Activated T-helper 2 cell treated with anti-CD3 and anti-CD28 coated beads, Interferon-gamma antibody, Interleukin-2, Interleukin-4, amounts not matched to agents 10 μg/mL and 5 μg/mL and 100 μg/mL, durations not matched to agents 14 hours and 24 hours and 36 hours (primary cell): ENCODE measurements at regions of chr16 and their contacts with region 1.

Region 1: GRCh38 chr16:15650019-15650697 is at the start of gene NDE1:
- DNase-seq: peak; percentile 78
- H3K4me3 Mint-ChIP-seq: peak within 1 kb of the TSS; percentile 98
- H3K27ac Mint-ChIP-seq: peak within 1 kb of the TSS; percentile 99
- H3K4me1 Mint-ChIP-seq: peaks cover 16% of the 10 kb centered on the region
- H3K27me3 Mint-ChIP-seq: no peaks in the 10 kb centered on the region
- total RNA-seq, gene NDE1: 88.8 and 97.7 TPM in 2 replicates

Region 2: GRCh38 chr16:15672514-15673167 is 22.5 kb after region 1 on chr16:
- intact Hi-C with region 1: loop called (anchors 2 kb)
- DNase-seq: peak; percentile 80
- H3K4me3 Mint-ChIP-seq: peak overlapping the region; percentile 61
- H3K27ac Mint-ChIP-seq: peak overlapping the region; percentile 92
- H3K4me1 Mint-ChIP-seq: peaks cover 31% of the 10 kb centered on the region
- H3K27me3 Mint-ChIP-seq: no peaks in the 10 kb centered on the region